ENCODE measurements at regions of chr10 and their contacts with region 1.

Region 1: GRCh38 chr10:58399410-58399809 is 14.2 kb downstream of the TFAM start:
- DNase-seq: no peak
- H3K4me3 ChIP-seq: no peak overlapping the region
- H3K4me3 Mint-ChIP-seq: no peak overlapping the region
- H3K27ac Mint-ChIP-seq: no peak overlapping the region
- H3K4me1 ChIP-seq: no peaks in the 10 kb centered on the region
- H3K4me1 Mint-ChIP-seq: no peaks in the 10 kb centered on the region
- H3K27me3 ChIP-seq: no peaks in the 10 kb centered on the region
- H3K27me3 Mint-ChIP-seq: no peaks in the 10 kb centered on the region
- CTCF ChIP-seq: no peak

Region 2: DNA sequence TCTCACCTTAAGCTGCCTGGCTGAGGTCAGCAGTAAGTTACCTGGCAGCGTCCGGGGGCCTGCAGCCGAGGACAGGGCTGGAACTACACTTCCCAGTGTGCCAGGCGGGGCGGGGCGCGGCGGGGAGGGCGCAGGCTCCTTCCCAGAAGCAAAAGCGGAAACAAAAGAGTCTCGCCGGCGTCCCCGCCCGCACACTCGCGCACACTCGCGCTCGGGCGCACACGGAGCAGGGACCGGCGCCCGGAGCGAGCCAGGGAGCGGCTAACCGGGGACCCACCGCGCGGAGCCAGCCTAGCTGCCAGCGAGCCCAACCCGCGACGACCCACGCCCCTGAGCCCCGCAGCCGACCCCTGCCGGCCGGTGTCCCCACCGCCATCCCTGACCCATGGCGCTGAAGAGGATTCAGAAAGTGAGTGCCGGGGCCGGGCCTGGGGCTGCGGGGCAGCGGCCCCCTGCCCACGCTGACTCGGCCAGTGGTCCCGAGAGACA is 64.5 kb before region 1 on chr10 and contains the start of gene UBE2D1:
- CTCF ChIA-PET with region 1: no interaction called
- POLR2A ChIA-PET with region 1: no interaction called
- intact Hi-C with region 1: no loop called
- DNase-seq: peak; percentile 95 to 97
- H3K4me3 ChIP-seq: peak within 1 kb of the TSS; percentile 83
- H3K4me3 Mint-ChIP-seq: peak within 1 kb of the TSS; percentile 84
- H3K27ac Mint-ChIP-seq: peak within 1 kb of the TSS; percentile 84
- H3K4me1 ChIP-seq: peaks cover 8% of the 10 kb centered on the region
- H3K4me1 Mint-ChIP-seq: peaks cover 16% of the 10 kb centered on the region
- H3K27me3 ChIP-seq: no peaks in the 10 kb centered on the region; the same call in 1 of the 2 replicates
- H3K27me3 Mint-ChIP-seq: peaks cover 8% of the 10 kb centered on the region
- CTCF ChIP-seq: peak; percentile 45 to 59
- total RNA-seq, gene UBE2D1: 35.1 and 39.7 TPM in 2 replicates

Region 3: GRCh38 chr10:58444876-58445275 is 45.5 kb after region 1 on chr10:
- CTCF ChIA-PET with region 1: no interaction called
- POLR2A ChIA-PET with region 1: no interaction called
- intact Hi-C with region 1: no loop called
- DNase-seq: peak; percentile 30 to 53
- H3K4me3 ChIP-seq: no peak overlapping the region
- H3K4me3 Mint-ChIP-seq: peak overlapping the region; percentile 35
- H3K27ac Mint-ChIP-seq: peak overlapping the region; percentile 27
- H3K4me1 ChIP-seq: peaks cover 17% of the 10 kb centered on the region
- H3K4me1 Mint-ChIP-seq: peaks cover 9% of the 10 kb centered on the region
- H3K27me3 ChIP-seq: no peaks in the 10 kb centered on the region
- H3K27me3 Mint-ChIP-seq: no peaks in the 10 kb centered on the region
- CTCF ChIP-seq: no peak

Region 4: DNA sequence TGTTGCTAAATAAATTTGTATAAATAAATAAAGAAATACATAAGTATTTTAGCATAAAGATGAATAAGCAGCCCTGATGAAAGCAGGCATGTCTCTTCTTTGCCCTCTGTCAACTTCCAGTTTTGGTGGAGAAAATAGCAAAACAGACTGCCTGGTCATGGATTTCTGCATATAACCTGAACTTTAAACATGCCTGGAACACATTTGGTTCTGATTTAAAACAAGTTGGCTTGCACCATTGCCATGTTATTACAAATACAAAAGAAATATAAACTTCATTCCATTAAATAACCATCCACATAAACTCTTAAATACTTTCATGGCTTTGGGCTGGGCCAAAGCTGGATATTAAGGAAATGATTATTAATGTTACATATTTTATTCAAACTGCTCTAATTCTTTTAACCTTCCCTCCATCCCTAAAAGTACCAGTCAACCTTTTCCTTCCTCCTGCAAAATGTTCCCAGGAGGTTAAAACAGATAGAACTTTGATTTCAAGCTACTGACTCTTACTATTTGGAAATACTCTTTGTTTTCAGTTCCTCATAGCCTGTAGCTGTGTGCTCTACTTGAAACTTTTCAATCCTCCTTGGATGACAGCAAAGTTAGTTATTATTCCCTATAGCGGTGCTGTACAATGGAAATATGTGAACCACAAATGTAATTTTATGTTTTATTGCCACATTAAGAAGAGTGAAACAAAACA is 209.6 kb after region 1 on chr10:
- CTCF ChIA-PET with region 1: no interaction called
- POLR2A ChIA-PET with region 1: interaction called, 11 read pairs
- intact Hi-C with region 1: no loop called
- DNase-seq: no peak
- H3K4me3 ChIP-seq: no peak overlapping the region
- H3K4me3 Mint-ChIP-seq: no peak overlapping the region
- H3K27ac Mint-ChIP-seq: no peak overlapping the region
- H3K4me1 ChIP-seq: peaks cover 10% of the 10 kb centered on the region; the same call in 1 of the 2 replicates
- H3K4me1 Mint-ChIP-seq: peaks cover 13% of the 10 kb centered on the region
- H3K27me3 ChIP-seq: no peaks in the 10 kb centered on the region
- H3K27me3 Mint-ChIP-seq: no peaks in the 10 kb centered on the region
- CTCF ChIP-seq: no peak